ENCODE measurements at regions of chr22 and their contacts with region 1.

Region 1: GRCh38 chr22:17158568-17159503 is at the start of gene HDHD5:
- DNase-seq: peak; percentile 86 to 88
- ATAC-seq: peak; percentile 89
- H3K4me3 ChIP-seq: peak within 1 kb of the TSS; percentile 70 to 90 (median 80)
- H3K27ac ChIP-seq: peak within 1 kb of the TSS; percentile 91 to 94 (median 91)
- H3K4me1 ChIP-seq: peaks cover 31 to 39% of the 10 kb centered on the region in 2 donors
- H3K27me3 ChIP-seq: no peaks in the 10 kb centered on the region
- CTCF ChIP-seq: peak in 1 of 5 experiments; percentile 11
- POLR2A ChIP-seq: peak; percentile 82 to 83
- total RNA-seq, gene HDHD5: 32.0 to 38.5 (median 35.1) TPM

Region 2: GRCh38 chr22:16975155-16975885 is 183.5 kb before region 1 on chr22:
- in situ Hi-C with region 1: no loop called
- intact Hi-C with region 1: no loop called
- DNase-seq: no peak
- ATAC-seq: no peak
- H3K4me3 ChIP-seq: no peak overlapping the region
- H3K27ac ChIP-seq: no peak overlapping the region
- H3K4me1 ChIP-seq: no peaks in the 10 kb centered on the region
- H3K27me3 ChIP-seq: peaks cover 0 to 3% (median 0%) of the 10 kb centered on the region in 3 donors
- CTCF ChIP-seq: no peak
- POLR2A ChIP-seq: no peak

Region 3: DNA sequence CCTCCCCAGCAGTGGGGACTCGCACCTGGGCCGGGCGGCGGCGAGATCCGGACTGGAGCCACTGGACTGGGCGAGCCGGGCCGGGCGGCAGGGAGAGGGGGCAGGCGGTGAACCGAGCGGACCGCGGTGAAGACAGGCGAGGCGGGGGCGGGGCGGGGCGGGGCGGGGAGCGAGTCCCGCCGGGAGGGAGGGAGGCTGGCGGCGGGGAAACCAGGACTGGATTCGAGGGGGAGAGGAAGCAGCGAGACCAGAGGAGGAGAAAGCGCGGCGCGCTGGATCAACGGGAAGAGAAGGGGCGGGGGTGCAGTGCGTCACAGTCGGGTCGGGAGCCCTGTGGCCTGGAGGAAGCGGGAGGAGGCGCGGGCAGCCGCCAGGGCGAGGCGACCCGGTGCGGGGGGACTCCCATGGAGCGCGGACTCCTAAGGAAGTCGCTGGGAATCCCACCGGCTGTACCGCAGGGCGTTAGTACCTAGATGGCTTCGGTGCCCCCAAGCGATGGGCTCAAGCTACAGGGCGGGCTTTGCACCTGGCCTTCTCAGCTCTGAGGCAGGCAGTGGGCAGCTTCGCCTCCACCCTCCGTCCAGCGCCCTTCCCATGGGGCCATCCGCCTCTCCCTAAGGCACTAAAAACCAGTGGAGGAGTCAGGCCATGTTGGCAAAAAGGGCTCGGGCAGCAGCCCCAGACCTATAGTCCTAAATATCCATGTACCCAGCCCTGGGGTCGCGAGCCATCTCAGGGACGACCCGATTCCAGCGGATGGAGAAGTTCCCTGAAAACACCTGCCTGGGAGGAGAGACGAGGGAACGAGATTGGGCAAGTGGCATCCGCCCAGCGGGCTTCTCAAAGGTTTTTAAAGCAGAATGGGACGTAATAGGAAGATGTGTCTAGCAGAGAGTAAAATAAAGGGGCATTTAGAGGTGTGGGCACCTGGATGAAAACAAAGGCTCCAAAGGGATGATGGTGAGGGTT is 37.3 kb before region 1 on chr22 and contains the start of gene TMEM121B:
- in situ Hi-C with region 1: no loop called
- intact Hi-C with region 1: loop called (anchors 5 kb)
- DNase-seq: peak; percentile 36 to 59
- ATAC-seq: peak; percentile 40 to 63
- H3K4me3 ChIP-seq: peak within 1 kb of the TSS; percentile 56 to 67 (median 60)
- H3K27ac ChIP-seq: peak within 1 kb of the TSS; percentile 24 to 51 (median 32)
- H3K4me1 ChIP-seq: peaks cover 12% of the 10 kb centered on the region in 2 donors
- H3K27me3 ChIP-seq: no peaks in the 10 kb centered on the region
- CTCF ChIP-seq: no peak
- POLR2A ChIP-seq: no peak
- total RNA-seq, gene TMEM121B: 0.17 to 0.29 (median 0.24) TPM